ENCODE measurements at regions of chr2 and their contacts with region 1.

Region 1: GRCh38 chr2:17518212-17519154 is at the start of gene RAD51AP2:
- DNase-seq: peak; percentile 95
- H3K4me3 ChIP-seq: peak within 1 kb of the TSS; percentile 33 to 53 (median 48)
- H3K27ac ChIP-seq: peak within 1 kb of the TSS; percentile 79 to 85 (median 81)
- H3K4me1 ChIP-seq: peaks cover 0 to 19% (median 6%) of the 10 kb centered on the region in 4 donors
- H3K27me3 ChIP-seq: no peaks in the 10 kb centered on the region
- CTCF ChIP-seq: no peak
- EP300 ChIP-seq: no peak
- POLR2A ChIP-seq: no peak
- total RNA-seq, gene RAD51AP2: 0.16 TPM in 1 of 4 donors, not detected in the others

Region 2: DNA sequence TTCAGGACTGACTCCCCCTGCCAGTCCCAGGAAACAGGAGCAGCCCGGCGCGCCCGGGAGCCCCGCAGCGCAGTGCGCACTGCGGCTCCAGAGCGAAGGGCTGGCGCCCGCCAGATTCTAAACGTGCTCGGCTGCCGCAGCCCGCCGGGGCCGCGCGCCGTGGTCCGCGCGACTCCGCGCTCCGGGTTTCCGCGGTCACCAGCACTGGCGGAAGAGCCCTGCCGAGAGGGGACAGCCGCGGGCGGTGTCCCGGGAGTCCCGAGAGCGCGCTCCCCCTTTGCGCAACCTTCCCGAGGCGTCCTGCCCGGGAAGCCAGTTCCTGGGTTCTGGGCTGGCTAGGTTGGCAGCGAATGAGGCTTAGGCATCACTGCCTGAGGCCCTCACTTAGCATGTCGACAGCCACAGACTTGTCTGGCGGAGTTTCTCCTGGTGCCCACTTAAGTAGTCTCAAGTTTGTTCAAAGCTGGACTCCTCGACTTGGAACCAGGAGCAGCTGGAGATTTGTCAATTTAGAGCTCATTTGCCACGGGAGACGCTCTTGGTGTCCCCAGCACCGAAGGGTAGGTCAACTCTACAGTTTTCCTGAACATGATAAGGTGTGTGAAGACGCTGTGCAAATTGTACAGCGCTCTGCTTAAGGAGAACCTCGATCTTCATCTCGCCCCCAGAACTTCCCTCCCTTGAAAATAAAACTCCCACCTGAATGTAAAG is 20.5 kb after region 1 on chr2:
- intact Hi-C with region 1: loop called (anchors 2 kb)
- DNase-seq: peak; percentile 77
- H3K4me3 ChIP-seq: peak overlapping the region; percentile 33 to 60 (median 51)
- H3K27ac ChIP-seq: peak overlapping the region; percentile 56 to 85 (median 74)
- H3K4me1 ChIP-seq: peaks cover 0 to 33% (median 25%) of the 10 kb centered on the region in 4 donors
- H3K27me3 ChIP-seq: peaks cover 0 to 26% (median 3%) of the 10 kb centered on the region in 3 donors
- CTCF ChIP-seq: no peak
- EP300 ChIP-seq: no peak
- POLR2A ChIP-seq: no peak

Region 3: GRCh38 chr2:17646081-17646554 is 127.6 kb after region 1 on chr2:
- intact Hi-C with region 1: loop called (anchors 5 kb)
- DNase-seq: no peak
- H3K4me3 ChIP-seq: no peak overlapping the region
- H3K27ac ChIP-seq: peak overlapping the region in 1 of 4 donors; percentile 38
- H3K4me1 ChIP-seq: peaks cover 0 to 38% (median 35%) of the 10 kb centered on the region in 4 donors
- H3K27me3 ChIP-seq: no peaks in the 10 kb centered on the region
- CTCF ChIP-seq: peak; percentile 54 to 79 (median 77)
- EP300 ChIP-seq: no peak
- POLR2A ChIP-seq: no peak